A673 (cell line): ENCODE measurements at regions of chr4 and their contacts with region 1.

Region 1: DNA sequence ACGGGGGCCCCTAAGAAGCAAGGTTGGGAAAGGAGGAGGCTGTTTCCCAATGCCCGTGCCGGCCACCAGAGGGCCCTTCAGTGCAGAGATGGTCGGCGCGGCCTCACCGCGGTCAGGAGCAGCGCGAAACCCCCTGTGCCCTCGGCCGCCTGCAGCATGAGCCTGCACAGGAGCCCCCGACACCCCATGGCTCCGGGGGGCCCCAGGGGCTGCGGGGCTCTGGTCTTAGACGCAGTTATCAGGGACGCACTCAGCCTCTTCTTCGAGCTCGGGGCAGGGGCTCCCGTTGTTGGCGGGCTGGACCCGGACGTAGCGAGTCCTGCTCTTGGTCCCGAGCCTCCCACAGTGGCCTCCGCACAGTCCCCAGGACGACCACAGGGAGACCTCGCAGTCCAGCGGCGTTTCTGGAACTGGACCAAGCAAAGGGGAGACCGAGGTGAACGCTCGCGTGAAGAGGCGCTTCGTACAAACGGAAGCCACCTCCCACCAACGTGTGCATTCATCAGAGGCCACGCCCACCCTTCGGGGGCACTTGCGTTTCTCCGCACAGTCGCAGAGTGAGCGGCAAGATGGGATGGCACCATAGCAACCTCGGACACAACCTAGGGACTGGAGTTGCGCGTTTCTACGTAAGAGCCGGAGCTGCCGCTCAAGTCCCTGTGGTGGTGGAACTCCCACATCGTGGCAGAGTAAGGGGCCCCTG is 5.0 kb downstream of the SPON2 start:
- DNase-seq: peak; percentile 97
- H3K4me3 ChIP-seq: peak overlapping the region; percentile 67
- H3K27ac ChIP-seq: peak overlapping the region; percentile 79
- H3K4me1 ChIP-seq: peaks cover 4% of the 10 kb centered on the region
- H3K27me3 ChIP-seq: peaks cover 23% of the 10 kb centered on the region
- CTCF ChIP-seq: peak; percentile 94

Region 2: GRCh38 chr4:288891-289290 is 878.5 kb before region 1 on chr4:
- CTCF ChIA-PET with region 1: no interaction called
- POLR2A ChIA-PET with region 1: interaction called, 20 read pairs
- intact Hi-C with region 1: no loop called
- DNase-seq: peak; percentile 18
- H3K4me3 ChIP-seq: no peak overlapping the region
- H3K27ac ChIP-seq: no peak overlapping the region
- H3K4me1 ChIP-seq: no peaks in the 10 kb centered on the region
- H3K27me3 ChIP-seq: no peaks in the 10 kb centered on the region
- CTCF ChIP-seq: no peak

Region 3: GRCh38 chr4:1266881-1267763 is 99.7 kb after region 1 on chr4:
- CTCF ChIA-PET with region 1: no interaction called
- POLR2A ChIA-PET with region 1: no interaction called
- intact Hi-C with region 1: loop called (anchors 5 kb)
- DNase-seq: no peak
- H3K4me3 ChIP-seq: no peak overlapping the region
- H3K27ac ChIP-seq: no peak overlapping the region
- H3K4me1 ChIP-seq: no peaks in the 10 kb centered on the region
- H3K27me3 ChIP-seq: no peaks in the 10 kb centered on the region
- CTCF ChIP-seq: no peak

Region 4: GRCh38 chr4:1346781-1347409 is 179.5 kb after region 1 on chr4 and contains the start of gene UVSSA:
- CTCF ChIA-PET with region 1: no interaction called
- POLR2A ChIA-PET with region 1: no interaction called
- intact Hi-C with region 1: loop called (anchors 5 kb)
- DNase-seq: peak; percentile 99
- H3K4me3 ChIP-seq: peak within 1 kb of the TSS; percentile 81
- H3K27ac ChIP-seq: peak within 1 kb of the TSS; percentile 93
- H3K4me1 ChIP-seq: no peaks in the 10 kb centered on the region
- H3K27me3 ChIP-seq: no peaks in the 10 kb centered on the region
- CTCF ChIP-seq: no peak
- total RNA-seq, gene UVSSA: 20.3 and 27.8 TPM in 2 replicates